Heart left ventricle (tissue), 16 donors: ENCODE measurements at regions of chr15 and their contacts with region 1.

Region 1: DNA sequence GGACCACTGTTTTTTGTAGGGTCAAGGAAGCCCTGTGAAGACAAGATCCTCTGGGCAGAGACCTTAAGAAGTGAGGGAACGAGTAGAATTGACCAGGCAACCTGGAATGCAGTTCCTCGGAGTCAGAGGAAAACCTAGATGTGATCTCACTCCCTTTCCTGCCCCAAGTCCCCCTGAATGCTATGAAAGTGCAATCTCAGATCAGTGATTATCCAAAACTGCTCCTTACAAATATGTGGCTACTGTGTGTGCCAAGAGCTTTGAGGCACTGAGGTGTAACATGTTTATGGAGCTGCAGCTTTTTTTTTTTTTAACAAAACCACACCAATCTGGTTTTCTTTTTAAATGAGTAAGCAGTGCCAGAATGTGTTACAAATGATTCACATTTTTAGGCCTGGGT is 35.8 kb downstream of the THSD4 start:
- DNase-seq: no peak
- ATAC-seq: no peak
- H3K4me3 ChIP-seq: no peak overlapping the region
- H3K27ac ChIP-seq: peak overlapping the region in 11 of 12 donors; percentile 69 to 87 (median 83)
- H3K4me1 ChIP-seq: peaks cover 0 to 87% (median 37%) of the 10 kb centered on the region in 12 donors
- H3K27me3 ChIP-seq: no peaks in the 10 kb centered on the region
- CTCF ChIP-seq: no peak
- POLR2A ChIP-seq: no peak

Region 2: DNA sequence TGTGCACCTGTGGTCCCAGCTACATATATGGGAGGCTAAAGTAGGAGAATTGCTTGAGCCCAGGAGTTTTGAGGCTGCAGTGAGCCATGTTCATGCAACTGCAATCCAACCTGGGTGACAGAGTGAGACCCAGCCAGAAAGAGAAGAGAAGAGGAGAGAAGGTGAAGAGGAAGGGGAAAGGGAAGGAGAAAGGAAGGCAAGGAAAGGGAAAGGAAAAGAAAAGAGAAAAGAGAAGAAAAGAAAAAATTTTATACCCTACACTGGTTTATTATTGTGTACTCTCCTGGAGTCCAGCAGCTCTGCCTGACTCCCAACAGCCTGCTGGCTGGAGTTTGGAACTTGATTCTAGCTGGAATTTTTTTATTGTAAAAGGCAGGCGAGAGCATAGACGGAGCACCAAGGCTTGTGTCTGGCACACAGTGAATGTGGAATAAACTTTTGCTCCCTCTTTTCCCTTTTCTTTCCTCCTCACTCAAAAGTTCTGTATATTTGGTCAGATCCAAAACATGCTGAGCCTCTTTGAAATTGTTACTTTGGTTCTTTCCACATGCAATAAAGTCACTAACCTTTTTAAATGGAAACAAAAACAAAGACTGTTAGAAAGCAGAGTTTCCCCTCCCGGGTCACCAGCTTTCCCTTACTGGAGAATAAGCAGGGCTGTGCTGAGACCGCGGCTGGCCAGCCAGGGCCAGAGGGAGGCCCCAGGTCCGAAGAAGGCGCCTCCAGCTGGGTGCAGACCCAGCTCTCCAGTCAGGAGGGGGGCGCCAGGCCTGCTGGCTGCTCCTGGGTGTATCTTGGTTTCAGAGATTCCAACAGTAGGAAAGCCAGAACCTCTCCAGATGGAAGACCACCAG is 25.9 kb before region 1 on chr15:
- intact Hi-C with region 1: loop called in 1 of 10 experiments (anchors 1 kb)
- DNase-seq: no peak
- ATAC-seq: peak; percentile 22 to 53 (median 40)
- H3K4me3 ChIP-seq: peak overlapping the region in 2 of 12 donors; percentile 2 to 25
- H3K27ac ChIP-seq: peak overlapping the region; percentile 4 to 90 (median 74)
- H3K4me1 ChIP-seq: peaks cover 0 to 77% (median 18%) of the 10 kb centered on the region in 12 donors
- H3K27me3 ChIP-seq: no peaks in the 10 kb centered on the region
- CTCF ChIP-seq: no peak
- POLR2A ChIP-seq: no peak

Region 3: DNA sequence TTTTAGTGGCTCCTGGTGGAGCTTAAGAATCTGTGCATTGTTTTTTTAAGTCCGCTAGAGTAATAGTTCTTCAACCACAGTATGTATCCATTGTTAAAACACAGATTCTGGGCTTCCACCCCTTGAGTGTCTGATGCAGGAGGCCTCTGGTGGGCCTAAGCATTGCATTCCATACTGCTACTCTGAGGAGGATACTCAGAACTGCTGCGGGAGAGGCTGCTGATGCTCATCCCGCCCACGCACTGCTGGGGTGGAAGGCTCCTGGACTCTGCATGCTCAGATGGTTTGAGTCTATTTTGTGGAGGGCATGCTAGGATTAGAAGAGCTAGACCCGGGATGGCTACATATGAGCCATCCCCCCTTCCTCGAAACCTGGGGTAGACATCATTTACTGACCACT is 38.6 kb after region 1 on chr15:
- intact Hi-C with region 1: loop called in 1 of 10 experiments (anchors 5 kb)
- DNase-seq: no peak
- ATAC-seq: no peak
- H3K4me3 ChIP-seq: no peak overlapping the region
- H3K27ac ChIP-seq: peak overlapping the region in 1 of 12 donors; percentile 11
- H3K4me1 ChIP-seq: peaks cover 0 to 26% (median 7%) of the 10 kb centered on the region in 12 donors
- H3K27me3 ChIP-seq: no peaks in the 10 kb centered on the region
- CTCF ChIP-seq: no peak
- POLR2A ChIP-seq: no peak

Region 4: DNA sequence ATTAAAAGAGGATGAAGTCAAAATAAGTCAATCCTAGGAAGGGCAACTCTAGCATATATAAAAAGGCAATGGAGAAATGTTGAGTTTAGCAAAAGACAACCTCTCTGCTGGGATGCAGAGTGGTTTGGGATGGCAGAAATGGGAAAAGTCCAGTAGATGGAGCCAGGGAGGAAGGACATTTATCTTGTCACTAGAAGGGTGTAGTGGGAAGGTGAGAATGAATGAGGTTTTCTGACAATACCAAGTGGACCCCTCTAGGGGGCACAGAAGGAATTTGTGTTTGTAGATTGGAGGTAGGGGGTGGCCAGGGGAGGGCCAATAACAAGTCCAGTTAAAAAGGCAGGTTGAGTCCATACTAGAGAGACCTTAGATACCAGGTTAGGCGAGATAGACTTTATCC is 44.2 kb after region 1 on chr15:
- intact Hi-C with region 1: loop called in 1 of 10 experiments (anchors 5 kb)
- DNase-seq: no peak
- ATAC-seq: no peak
- H3K4me3 ChIP-seq: no peak overlapping the region
- H3K27ac ChIP-seq: no peak overlapping the region
- H3K4me1 ChIP-seq: peaks cover 0 to 38% (median 8%) of the 10 kb centered on the region in 12 donors
- H3K27me3 ChIP-seq: no peaks in the 10 kb centered on the region
- CTCF ChIP-seq: peak in 2 of 12 donors; percentile 13 to 14
- POLR2A ChIP-seq: no peak

Region 5: GRCh38 chr15:71237456-71238188 is 86.5 kb after region 1 on chr15:
- intact Hi-C with region 1: loop called in 3 of 10 experiments (anchors 5 to 10 kb)
- DNase-seq: peak; percentile 77 to 93 (median 82)
- ATAC-seq: peak; percentile 92 to 97 (median 94)
- H3K4me3 ChIP-seq: no peak overlapping the region
- H3K27ac ChIP-seq: peak overlapping the region in 11 of 12 donors; percentile 5 to 70 (median 61)
- H3K4me1 ChIP-seq: peaks cover 0 to 50% (median 10%) of the 10 kb centered on the region in 12 donors
- H3K27me3 ChIP-seq: no peaks in the 10 kb centered on the region
- CTCF ChIP-seq: peak in 1 of 12 donors; percentile 7
- POLR2A ChIP-seq: no peak

Region 6: DNA sequence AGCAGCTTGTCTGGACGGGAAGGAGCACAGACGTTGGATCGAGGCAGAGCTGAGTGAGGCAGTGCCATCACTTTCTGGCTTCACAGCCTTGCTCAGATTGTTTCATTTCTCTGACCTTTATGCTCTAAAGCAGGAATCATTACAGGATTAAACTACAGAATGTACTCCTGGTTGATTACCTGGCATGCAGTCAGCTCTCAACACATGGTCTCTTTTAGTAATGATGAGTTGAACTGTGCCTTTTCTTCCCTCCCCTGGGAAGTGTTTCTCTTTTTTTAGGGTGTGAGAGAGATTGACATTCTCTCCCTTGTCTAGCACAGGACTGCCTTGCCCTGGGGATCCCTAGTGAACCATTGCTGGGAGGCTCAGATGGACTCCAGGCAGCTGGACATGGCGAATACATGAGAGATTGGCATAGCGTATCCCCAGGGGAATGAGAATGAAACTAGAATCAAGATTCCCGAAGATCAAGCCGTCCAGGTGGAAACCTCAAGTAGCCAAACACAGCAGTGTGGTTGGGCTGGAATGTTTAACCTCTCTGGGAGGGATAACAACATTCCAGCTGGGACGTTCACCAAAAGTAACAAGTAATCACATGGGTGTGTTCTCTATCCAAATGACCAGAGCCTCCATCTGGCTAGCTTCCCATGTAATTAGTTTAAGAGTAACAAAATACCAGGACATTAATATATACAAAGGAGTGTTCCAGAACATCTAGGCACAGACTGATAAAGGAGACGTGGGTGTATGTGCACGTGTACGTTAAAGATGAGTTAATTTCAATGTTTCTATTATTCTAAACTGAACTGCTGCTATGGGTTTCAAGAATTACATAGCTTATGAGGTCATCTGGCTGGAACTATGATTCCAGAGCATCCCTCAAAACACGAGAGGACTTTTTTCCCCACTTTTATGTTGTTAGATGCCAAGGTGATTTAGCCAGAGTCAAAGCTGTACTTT is 540.7 kb after region 1 on chr15:
- intact Hi-C with region 1: no loop called
- DNase-seq: peak in 4 of 5 donors; percentile 22 to 42 (median 30)
- ATAC-seq: peak; percentile 75 to 79 (median 78)
- H3K4me3 ChIP-seq: peak overlapping the region in 2 of 12 donors; percentile 16 to 18
- H3K27ac ChIP-seq: peak overlapping the region; percentile 66 to 88 (median 76)
- H3K4me1 ChIP-seq: peaks cover 0 to 50% (median 24%) of the 10 kb centered on the region in 12 donors
- H3K27me3 ChIP-seq: no peaks in the 10 kb centered on the region
- CTCF ChIP-seq: no peak
- POLR2A ChIP-seq: no peak